Left ventricle myocardium inferior (tissue), 1 donor: ENCODE measurements at regions of chr3 and their contacts with region 1.

Region 1: GRCh38 chr3:13495921-13496723 is 16.0 kb downstream of the HDAC11 start:
- DNase-seq: peak; percentile 76
- H3K4me3 ChIP-seq: no peak overlapping the region
- H3K27ac ChIP-seq: peak overlapping the region; percentile 5
- H3K4me1 ChIP-seq: peaks cover 22% of the 10 kb centered on the region
- H3K27me3 ChIP-seq: no peaks in the 10 kb centered on the region
- CTCF ChIP-seq: peak; percentile 95

Region 2: DNA sequence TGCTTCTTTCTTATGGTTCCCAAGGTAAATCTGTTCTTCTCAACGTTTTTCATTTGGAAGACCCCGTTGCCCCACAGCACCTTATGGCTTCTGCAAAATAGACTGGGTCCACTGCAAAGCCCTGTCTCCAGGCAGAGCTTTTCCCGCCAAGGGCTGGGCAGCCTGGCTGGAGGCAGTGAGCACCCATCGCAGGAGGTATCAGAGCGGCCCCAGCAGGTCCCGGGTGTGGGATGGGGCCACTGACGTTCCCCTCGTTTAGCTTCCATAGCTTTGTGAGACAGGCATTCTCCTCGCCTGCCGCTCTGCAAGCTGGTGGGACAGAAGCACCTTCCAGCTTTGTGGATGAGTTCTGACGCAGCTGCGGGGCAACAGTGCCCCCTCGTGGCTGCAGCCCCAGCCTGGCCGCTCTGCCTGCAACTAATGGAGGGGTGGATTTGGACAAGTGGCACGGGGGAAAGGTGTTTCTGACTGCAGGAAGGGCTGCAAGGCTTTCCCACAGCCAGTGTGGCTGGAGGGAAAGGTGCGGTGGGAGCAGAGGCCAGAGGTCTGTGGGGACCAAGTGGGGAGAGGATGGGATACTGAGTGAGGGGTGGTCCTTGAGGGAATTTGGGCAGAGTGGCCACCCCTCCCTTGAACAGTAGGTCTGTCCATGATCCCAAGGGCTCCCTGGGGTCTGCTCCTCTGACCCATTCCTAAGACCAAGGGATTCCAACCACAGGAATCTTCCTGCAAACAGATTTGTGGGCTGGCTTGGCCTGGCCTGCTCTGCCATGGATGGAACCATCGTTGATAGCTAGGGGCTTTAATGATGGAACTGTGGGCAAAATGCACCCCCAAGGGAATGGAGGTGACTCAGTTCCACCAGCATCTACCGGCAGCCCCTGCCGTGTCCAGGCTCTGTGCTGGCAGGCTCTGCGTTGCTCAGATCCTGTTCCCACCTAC is 152.2 kb after region 1 on chr3:
- intact Hi-C with region 1: loop called (anchors 2 kb)
- DNase-seq: peak; percentile 80
- H3K4me3 ChIP-seq: no peak overlapping the region
- H3K27ac ChIP-seq: no peak overlapping the region
- H3K4me1 ChIP-seq: peaks cover 15% of the 10 kb centered on the region
- H3K27me3 ChIP-seq: peaks cover 41% of the 10 kb centered on the region
- CTCF ChIP-seq: peak; percentile 97